ENCODE measurements at regions of chr10 and their contacts with region 1.

Region 1: DNA sequence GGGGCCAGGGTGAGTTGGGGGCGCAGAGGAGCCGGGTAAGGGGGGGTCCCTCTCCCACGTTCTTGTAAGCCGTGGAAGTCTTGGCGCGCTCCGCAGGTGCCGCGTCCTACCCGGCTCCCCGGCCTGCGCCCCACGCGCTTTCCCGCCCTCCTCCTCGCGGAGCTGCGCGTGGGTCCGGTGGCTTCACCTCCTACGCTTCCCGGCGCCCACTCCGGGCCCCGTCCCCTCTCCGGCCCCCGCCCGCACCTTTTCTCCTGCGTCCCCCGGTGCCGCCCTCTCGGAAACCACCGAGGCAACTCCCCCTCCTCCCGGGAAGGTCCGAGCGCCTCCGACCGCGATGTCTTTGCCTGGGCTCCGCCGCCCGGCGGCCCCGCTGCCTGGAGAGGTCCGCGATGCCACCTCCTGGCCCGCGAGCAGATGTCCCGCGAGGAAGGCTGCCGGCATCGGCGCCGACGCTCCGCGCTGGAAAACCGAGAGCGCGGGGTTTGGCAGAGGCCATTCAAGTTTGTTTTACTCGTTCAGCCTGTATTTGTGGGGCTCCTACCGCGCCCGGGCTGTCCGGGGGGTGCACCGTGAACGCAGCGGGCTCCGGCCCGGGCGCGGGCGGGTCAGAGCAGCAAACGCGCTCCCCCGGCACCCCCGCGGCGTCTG is 2.4 kb upstream of the NKX6-2 start:
- DNase-seq: no peak
- ATAC-seq: no peak
- H3K4me3 ChIP-seq: no peak overlapping the region
- H3K27ac ChIP-seq: no peak overlapping the region
- H3K4me1 ChIP-seq: no peaks in the 10 kb centered on the region
- H3K27me3 ChIP-seq: no peaks in the 10 kb centered on the region

Region 2: GRCh38 chr10:132665946-132666704 is 122.2 kb before region 1 on chr10:
- intact Hi-C with region 1: loop called in 1 of 4 experiments (anchors 10 kb)
- DNase-seq: no peak
- ATAC-seq: peak in 1 of 2 donors; percentile 59
- H3K4me3 ChIP-seq: no peak overlapping the region
- H3K27ac ChIP-seq: no peak overlapping the region
- H3K4me1 ChIP-seq: no peaks in the 10 kb centered on the region
- H3K27me3 ChIP-seq: no peaks in the 10 kb centered on the region

Region 3: DNA sequence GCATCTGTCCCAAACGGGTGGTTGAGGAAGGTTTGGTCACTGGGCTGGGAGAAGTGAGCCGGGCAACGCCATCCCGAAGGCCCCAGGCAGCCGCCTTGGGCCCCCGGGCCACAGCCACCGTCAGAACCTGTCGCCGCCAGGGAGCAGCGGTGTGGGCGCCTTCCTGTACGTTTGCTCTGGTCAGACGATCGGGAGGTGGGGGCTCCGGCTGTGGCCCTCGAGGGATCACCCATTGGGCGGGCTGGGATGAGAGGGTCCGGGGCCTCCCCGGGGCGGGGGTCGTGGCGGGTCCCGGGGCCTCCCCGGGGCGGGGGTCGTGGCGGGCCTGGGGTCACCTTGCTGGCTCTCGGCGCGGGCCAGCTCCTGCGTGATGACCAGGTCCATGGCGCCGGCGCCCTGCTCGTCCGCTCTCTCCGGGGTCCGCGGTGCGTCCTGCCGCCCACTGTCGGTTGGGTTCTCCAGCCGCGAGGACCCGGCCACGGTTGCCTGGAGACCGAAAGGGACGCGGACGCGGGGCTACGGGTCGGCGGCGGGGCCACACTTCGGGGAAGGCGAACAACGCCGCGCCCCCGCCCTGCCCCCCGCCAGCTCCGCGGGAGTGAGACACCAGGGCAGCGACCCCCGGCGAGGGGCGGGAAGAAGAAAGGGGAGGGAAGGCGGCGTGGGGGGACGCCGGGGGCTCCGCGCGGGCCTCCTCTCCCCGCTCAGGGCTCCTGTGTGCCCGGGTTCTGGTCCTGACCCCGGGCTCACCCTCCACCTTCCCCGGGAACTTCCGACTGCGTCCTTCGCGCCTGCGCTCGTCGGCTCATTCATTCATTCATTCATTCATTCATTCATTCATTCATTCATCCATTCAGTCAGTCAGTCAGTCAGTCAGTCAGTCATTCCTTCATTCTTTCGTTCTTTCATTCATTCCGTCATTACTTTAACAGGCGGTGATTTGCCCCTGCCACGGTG is 154.1 kb after region 1 on chr10 and contains the start of gene CFAP46:
- intact Hi-C with region 1: no loop called
- DNase-seq: peak; percentile 78 to 88 (median 86)
- ATAC-seq: peak; percentile 70 to 82
- H3K4me3 ChIP-seq: peak within 1 kb of the TSS; percentile 58
- H3K27ac ChIP-seq: no peak within 1 kb of the TSS
- H3K4me1 ChIP-seq: no peaks in the 10 kb centered on the region
- H3K27me3 ChIP-seq: no peaks in the 10 kb centered on the region
- total RNA-seq, gene CFAP46: 1.5 to 1.8 (median 1.7) TPM